Dorsolateral prefrontal cortex (tissue), 120 donors: ENCODE measurements at regions of chr9 and their contacts with region 1.

Region 1: GRCh38 chr9:105244003-105244733 is at the start of gene SLC44A1:
- DNase-seq: peak; percentile 93 to 98 (median 96)
- H3K4me3 ChIP-seq: peak within 1 kb of the TSS; percentile 56 to 96 (median 86)
- H3K27ac ChIP-seq: peak within 1 kb of the TSS; percentile 73 to 98 (median 95)
- H3K27me3 ChIP-seq: no peaks in the 10 kb centered on the region
- CTCF ChIP-seq: peak in 43 of 56 donors; percentile 16 to 56 (median 33)
- total RNA-seq, gene SLC44A1: 60.7 to 602 (median 176) TPM

Region 2: GRCh38 chr9:104927912-104928740 is 316.0 kb before region 1 on chr9 and contains the start of gene ABCA1:
- intact Hi-C with region 1: loop called (anchors 5 kb)
- DNase-seq: peak; percentile 56 to 97 (median 90)
- H3K4me3 ChIP-seq: peak within 1 kb of the TSS; percentile 64 to 97 (median 82)
- H3K27ac ChIP-seq: peak within 1 kb of the TSS; percentile 15 to 91 (median 79)
- H3K27me3 ChIP-seq: no peaks in the 10 kb centered on the region
- CTCF ChIP-seq: peak in 3 of 56 donors; percentile 6 to 16 (median 13)
- total RNA-seq, gene ABCA1: 7.9 to 53.6 (median 16.8) TPM

Region 3: DNA sequence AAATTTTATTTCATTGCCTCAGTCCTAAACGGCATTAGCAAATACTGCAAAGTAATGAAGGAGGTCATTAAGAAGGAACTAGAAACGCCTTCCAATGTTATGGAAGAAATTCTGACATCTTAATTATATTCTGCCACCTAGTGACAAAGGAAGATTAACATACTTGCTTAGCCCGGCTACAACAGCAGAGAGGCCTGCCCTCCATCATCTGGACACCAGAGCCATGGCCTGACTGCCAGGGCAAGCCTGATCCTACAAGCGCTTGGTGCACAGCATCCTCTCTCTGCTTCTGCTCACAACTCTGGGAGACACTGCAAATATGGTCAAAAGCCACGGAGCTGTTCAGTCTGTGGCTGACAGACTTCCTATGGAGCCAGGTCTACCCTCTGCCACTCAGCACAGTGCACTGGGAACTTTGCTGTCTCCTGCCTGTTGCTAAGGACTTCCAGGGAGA is 87.0 kb before region 1 on chr9:
- intact Hi-C with region 1: loop called (anchors 2 to 10 kb)
- DNase-seq: peak in 8 of 10 donors; percentile 23 to 64 (median 56)
- H3K4me3 ChIP-seq: peak overlapping the region in 1 of 59 donors; percentile 2
- H3K27ac ChIP-seq: peak overlapping the region in 36 of 59 donors; percentile 2 to 78 (median 48)
- H3K27me3 ChIP-seq: no peaks in the 10 kb centered on the region
- CTCF ChIP-seq: peak; percentile 47 to 90 (median 72)

Region 4: DNA sequence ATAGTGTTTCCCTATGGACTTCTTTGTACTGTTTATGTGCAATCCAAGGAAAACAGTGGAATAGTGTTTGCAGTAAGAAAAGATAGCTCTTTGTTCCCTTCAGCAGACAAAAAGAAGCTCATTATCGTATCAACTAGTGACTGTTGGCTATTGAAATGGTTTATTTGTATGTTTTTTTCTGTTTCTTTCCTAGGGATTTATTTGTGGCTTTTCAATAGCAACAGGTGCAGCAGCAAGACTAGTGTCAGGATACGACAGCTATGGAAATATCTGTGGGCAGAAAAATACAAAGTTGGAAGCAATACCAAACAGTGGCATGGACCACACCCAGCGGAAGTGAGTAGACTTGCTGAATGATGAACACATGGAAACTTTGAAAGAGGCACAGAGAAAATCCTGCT is 65.4 kb after region 1 on chr9:
- intact Hi-C with region 1: loop called in 1 of 2 experiments (anchors 2 kb)
- DNase-seq: no peak
- H3K4me3 ChIP-seq: peak overlapping the region in 10 of 59 donors; percentile 3 to 29 (median 15)
- H3K27ac ChIP-seq: peak overlapping the region; percentile 22 to 99 (median 95)
- H3K27me3 ChIP-seq: no peaks in the 10 kb centered on the region
- CTCF ChIP-seq: peak in 9 of 56 donors; percentile 8 to 29 (median 17)

Region 5: GRCh38 chr9:105385381-105385985 is 141.3 kb after region 1 on chr9:
- intact Hi-C with region 1: loop called (anchors 5 kb)
- DNase-seq: peak in 5 of 10 donors; percentile 35 to 60 (median 41)
- H3K4me3 ChIP-seq: peak overlapping the region in 53 of 59 donors; percentile 0 to 54 (median 34)
- H3K27ac ChIP-seq: peak overlapping the region in 57 of 59 donors; percentile 6 to 80 (median 63)
- H3K27me3 ChIP-seq: no peaks in the 10 kb centered on the region
- CTCF ChIP-seq: no peak

Region 6: GRCh38 chr9:105401651-105402050 is 157.5 kb after region 1 on chr9:
- intact Hi-C with region 1: loop called in 1 of 2 experiments (anchors 5 kb)
- DNase-seq: no peak
- H3K4me3 ChIP-seq: no peak overlapping the region
- H3K27ac ChIP-seq: peak overlapping the region in 20 of 59 donors; percentile 4 to 65 (median 34)
- H3K27me3 ChIP-seq: no peaks in the 10 kb centered on the region
- CTCF ChIP-seq: peak in 4 of 56 donors; percentile 5 to 19 (median 15)

Region 7: DNA sequence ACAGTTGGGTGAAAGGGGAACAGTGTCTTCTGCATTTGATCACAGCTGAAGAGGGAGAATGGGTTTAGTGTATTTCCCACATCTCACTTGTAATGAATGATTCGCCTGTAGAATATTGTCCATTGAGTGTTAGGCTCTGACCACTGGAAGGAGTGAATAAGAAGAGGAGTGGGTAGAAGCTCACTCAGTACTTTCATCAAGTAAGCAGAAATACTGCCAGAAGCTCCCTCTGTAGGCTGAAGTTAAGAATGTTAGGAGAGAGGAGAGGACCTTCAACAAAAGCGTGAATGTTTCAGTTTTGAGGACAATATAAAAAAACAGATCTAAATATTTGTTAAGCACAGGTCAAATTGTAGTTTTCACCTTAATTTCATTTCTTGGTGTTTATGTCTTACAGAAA is 231.1 kb after region 1 on chr9:
- intact Hi-C with region 1: no loop called
- DNase-seq: no peak
- H3K4me3 ChIP-seq: peak overlapping the region in 1 of 59 donors; percentile 10
- H3K27ac ChIP-seq: peak overlapping the region in 1 of 59 donors; percentile 35
- H3K27me3 ChIP-seq: no peaks in the 10 kb centered on the region
- CTCF ChIP-seq: peak in 53 of 56 donors; percentile 12 to 72 (median 47)

Region 8: GRCh38 chr9:105541838-105542237 is 297.7 kb after region 1 on chr9:
- intact Hi-C with region 1: no loop called
- DNase-seq: no peak
- H3K4me3 ChIP-seq: no peak overlapping the region
- H3K27ac ChIP-seq: no peak overlapping the region
- H3K27me3 ChIP-seq: no peaks in the 10 kb centered on the region
- CTCF ChIP-seq: no peak